Head of caudate nucleus (tissue), 42 donors: ENCODE measurements at regions of chr11 and their contacts with region 1.

Region 1: DNA sequence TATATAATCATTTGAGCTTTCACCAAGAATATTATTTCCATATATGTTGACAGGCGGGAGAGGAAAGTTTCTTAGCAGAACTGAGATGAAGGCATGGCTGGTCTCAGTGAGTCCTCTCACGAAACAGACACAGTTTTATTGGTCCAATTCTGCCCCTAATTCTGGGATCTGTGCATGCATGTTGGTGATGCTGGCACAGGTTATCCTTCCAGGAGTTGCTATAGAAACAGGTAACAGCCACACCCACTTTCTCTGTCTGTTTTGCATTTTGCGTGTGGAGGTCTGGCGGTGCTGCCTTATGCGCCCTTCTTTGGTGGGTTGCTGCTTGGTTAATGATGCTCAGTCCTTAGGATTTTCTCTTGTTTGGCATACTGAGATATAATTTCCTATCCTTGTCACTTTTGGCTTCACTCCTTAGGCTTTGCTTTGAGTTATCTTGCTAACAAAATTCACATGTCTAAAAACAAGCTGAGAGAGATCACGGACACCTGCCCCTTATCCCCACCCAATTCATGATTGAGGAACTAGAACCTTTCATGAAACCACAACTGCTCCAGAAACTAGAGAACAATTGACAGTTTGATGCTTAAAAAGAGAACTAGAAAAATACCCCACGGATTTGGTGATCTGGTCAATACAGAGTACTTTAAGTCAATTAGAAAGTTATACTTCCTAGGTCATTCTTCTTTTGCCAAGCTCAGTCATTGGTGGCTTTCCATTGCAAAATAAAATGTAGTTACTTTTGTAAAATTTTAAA is 189.3 kb downstream of the FAT3 start:
- DNase-seq: peak in 3 of 42 donors; percentile 14 to 27 (median 16)

Region 2: DNA sequence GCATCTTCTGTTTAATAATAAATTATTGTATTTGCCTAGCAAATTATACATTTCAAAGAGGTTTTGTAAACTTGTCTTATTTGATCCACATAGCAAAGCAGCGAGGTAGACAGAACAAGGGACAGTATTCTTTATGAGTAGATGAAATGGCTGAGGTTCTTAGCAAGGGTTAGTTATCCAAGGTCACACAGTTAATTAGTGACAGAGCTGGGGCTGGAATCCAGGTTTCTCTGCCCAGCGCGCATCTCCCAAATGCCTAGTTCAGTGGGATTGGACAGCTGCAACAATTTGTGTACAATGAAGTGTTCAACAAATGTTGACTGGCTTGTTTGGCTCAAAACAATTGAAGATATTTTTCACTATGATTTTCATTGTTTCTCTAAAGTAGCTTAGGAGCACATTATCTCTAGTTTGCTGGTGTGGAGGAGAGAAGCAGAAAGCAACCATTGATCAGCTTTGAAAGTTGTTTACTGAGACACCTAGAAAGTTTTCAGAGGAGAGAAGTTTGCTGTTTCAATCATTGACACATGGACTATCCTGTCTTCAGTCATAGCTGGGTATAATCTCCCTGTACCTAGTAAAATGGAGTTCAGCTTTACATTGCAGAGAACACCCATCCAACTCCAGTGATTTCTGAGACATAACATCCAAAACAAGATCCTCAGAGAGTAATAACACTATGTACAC is 81.3 kb after region 1 on chr11:
- intact Hi-C with region 1: no loop called
- DNase-seq: no peak

Region 3: GRCh38 chr11:92735039-92735438 is 321.1 kb after region 1 on chr11:
- intact Hi-C with region 1: loop called (anchors 5 kb)
- DNase-seq: no peak